AG04449 (cell line): ENCODE measurements at regions of chr1 and their contacts with region 1.

Region 1: GRCh38 chr1:21368515-21369289 is 71.2 kb upstream of the NBPF3 start:
- DNase-seq: no peak
- H3K4me3 ChIP-seq: no peak overlapping the region
- CTCF ChIP-seq: peak; percentile 96

Region 2: DNA sequence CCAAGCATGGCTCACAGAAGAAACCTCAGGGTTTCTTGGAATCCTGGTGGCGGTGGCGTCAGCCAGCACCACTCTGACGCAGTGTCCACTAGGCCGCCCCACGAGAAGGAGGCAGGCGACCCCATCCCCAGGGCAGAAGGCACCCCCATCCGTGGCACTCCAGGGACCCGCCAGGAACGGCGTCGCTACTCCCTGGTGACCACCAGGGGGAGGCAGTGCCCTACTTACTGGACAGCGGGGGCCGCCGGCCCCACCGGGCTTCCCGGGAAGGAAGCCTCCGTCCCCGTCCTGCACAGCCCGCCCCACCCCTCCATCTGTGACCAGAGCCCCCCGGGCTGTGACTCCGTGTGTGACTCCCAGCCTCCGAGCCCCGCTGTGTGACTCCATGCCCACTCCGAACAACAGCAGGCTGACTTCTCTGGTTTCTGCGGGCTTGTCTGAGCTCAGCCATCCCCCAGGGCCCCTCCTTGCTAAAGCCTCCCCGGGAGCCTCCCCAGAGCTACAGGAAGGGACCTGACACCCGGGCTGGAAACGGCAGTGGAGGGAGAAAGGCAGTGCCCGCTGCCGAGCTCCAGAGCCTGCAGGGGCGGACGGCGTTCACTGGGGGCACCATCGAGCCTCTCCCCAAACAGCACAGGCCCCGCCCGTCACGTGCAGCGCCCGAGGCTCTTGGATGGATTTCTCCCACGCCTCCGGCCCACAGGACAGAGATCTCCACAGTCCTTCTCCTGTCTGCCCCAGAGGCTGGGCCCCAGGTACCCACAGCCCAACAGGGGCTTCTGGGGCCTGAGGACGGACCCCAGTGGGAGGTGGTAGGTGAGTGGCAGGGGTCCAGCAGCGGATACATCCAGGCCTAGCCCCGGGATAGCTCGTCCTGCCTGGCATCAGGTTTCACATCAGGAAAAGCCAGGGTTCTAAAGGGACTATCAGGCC is 672.0 kb before region 1 on chr1:
- CTCF ChIA-PET with region 1: interaction called, 13 read pairs
- POLR2A ChIA-PET with region 1: no interaction called
- DNase-seq: peak; percentile 70
- H3K4me3 ChIP-seq: peak overlapping the region; percentile 70
- CTCF ChIP-seq: peak; percentile 90

Region 3: DNA sequence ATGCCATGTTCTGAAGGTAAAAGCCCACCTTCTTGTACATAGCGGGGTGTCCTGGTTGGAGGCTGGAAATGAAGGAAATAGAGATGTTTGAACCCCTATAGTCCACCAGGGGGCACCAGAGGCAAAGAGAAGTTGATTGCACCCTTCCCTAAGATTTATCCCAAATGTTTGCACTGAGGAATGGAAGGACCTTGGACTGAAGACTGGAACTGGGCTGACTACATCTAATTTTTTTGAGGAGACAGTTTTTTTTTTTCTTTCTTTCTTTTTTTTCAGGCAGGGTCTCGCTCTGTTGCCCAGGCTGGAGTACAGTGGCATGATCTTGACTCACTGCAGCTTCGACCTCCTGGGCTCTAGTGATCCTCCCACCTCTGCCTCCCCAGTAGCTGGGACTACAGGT is 136.7 kb before region 1 on chr1:
- CTCF ChIA-PET with region 1: interaction called, 405 read pairs
- POLR2A ChIA-PET with region 1: interaction called, 4 read pairs
- DNase-seq: no peak
- H3K4me3 ChIP-seq: no peak overlapping the region
- CTCF ChIP-seq: peak; percentile 55

Region 4: GRCh38 chr1:21261551-21262281 is 107.0 kb before region 1 on chr1:
- CTCF ChIA-PET with region 1: interaction called, 381 read pairs
- POLR2A ChIA-PET with region 1: interaction called, 3 read pairs
- DNase-seq: peak; percentile 89
- H3K4me3 ChIP-seq: peak overlapping the region; percentile 15; the same call in 1 of the 2 replicates
- CTCF ChIP-seq: no peak

Region 5: GRCh38 chr1:21378705-21379494 is 10.2 kb after region 1 on chr1:
- CTCF ChIA-PET with region 1: interaction called, 19 read pairs
- POLR2A ChIA-PET with region 1: no interaction called
- DNase-seq: no peak
- H3K4me3 ChIP-seq: no peak overlapping the region
- CTCF ChIP-seq: no peak

Region 6: DNA sequence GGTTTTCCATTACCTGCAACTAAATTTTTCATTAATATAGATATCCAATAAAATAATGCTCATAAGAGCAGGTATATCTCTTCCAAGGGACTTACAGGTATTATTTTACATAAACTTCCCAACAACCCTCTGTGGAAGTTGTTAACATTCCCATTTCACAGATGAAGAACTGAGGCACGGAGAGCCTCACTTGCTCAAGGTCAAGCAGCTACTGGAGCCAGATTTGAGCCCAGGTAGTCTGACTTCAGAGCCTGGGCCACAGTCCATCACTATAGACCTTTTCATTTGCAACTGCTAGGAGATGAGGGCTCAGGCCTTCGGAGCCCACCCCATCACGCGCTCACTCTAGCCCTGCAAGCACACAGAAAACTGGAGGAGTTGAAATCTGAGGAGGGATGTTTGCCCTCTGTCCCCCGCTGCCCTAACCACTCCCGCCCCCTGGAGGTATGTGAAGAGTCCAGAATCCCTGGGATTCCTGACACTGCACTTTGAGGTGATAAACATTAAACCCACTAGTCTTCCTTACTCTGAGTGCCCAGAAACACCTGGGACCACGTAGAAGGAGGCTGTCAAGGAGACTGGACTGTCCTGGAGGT is 128.9 kb after region 1 on chr1:
- CTCF ChIA-PET with region 1: interaction called, 116 read pairs
- POLR2A ChIA-PET with region 1: no interaction called
- DNase-seq: no peak
- H3K4me3 ChIP-seq: no peak overlapping the region
- CTCF ChIP-seq: no peak

Region 7: DNA sequence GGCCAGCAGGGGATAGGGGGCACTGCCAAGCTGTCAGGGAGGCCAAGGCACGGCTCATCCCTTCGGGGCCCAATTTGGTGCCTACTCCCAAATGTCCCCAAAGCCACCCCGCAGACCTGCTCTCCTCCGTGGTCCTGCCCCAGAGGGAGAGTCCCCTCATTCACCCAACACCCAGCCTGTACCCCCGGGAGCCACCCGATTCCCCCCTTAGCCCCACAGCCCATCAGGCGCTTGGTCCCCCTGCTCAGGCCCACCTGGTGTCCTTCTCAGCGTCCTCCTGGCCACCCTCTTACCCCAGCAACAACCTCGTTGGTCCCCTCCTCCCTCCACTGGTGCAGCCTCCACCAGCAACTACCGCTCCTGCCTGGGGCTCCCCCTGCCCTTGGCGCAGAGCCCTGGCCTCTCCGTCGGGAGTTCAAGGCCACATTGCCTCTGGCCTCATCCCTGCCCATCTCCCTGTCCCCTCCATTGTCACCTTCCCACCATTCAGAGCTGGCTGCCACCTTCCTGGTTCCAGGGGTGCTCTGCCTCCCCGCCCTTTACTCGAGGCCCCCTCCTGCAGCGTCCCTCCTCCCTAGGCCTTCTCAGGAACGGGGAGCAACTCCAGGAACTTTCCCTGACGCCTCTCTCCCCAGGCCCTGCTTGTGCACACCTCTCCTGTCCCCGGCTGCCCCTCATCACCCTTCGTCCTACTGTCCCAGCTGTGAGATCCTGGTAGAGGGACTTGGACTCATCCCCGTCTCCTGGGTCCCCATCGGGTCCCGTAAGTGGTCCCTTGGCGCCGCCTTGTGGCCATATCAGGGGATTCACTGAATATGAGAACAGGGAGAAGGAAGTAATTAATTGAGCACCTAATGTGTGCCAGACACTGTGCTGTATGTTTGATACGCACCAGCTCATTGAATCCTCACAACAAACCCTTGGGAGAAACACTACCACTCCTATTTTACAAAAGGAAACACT is 226.5 kb after region 1 on chr1:
- CTCF ChIA-PET with region 1: interaction called, 90 read pairs
- POLR2A ChIA-PET with region 1: no interaction called
- DNase-seq: no peak
- H3K4me3 ChIP-seq: no peak overlapping the region
- CTCF ChIP-seq: peak; percentile 72